ENCODE measurements at regions of chrX and their contacts with region 1.

Region 1: GRCh38 chrX:136747003-136747986 is 33.4 kb downstream of the ARHGEF6 start:
- DNase-seq: no peak
- ATAC-seq: peak; percentile 61
- H3K4me3 ChIP-seq: no peak overlapping the region
- H3K4me3 Mint-ChIP-seq: peak overlapping the region in 9 of 10 donors; percentile 28 to 74 (median 52)
- H3K27ac ChIP-seq: no peak overlapping the region
- H3K27ac Mint-ChIP-seq: peak overlapping the region; percentile 6 to 91 (median 78)
- H3K4me1 ChIP-seq: peaks cover 16 to 40% of the 10 kb centered on the region in 2 donors
- H3K4me1 Mint-ChIP-seq: peaks cover 42 to 89% (median 86%) of the 10 kb centered on the region in 7 donors
- H3K27me3 ChIP-seq: no peaks in the 10 kb centered on the region
- H3K27me3 Mint-ChIP-seq: no peaks in the 10 kb centered on the region

Region 2: DNA sequence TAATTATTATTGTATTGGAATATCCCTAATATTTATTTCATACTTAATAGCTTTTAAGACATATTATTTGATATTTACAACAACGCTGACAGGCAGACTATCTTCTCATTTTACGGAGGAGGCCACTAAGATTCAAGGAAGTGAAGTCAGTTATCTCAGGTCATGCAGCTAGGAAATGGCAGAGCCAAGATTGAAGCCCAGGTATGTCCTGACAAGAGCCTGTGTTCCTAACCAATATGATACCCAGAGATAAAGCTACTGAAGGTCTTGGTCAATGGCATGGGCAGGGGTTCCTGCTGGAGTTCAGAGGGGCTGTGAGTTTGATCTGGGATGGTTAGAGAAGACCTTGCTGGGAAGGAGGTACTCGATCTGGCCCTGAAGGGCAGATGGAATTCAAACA is 13.7 kb before region 1 on chrX:
- CTCF ChIA-PET with region 1: no interaction called
- POLR2A ChIA-PET with region 1: no interaction called
- intact Hi-C with region 1: no loop called
- DNase-seq: no peak
- ATAC-seq: no peak
- H3K4me3 ChIP-seq: no peak overlapping the region
- H3K4me3 Mint-ChIP-seq: peak overlapping the region in 1 of 10 donors; percentile 3
- H3K27ac ChIP-seq: no peak overlapping the region
- H3K27ac Mint-ChIP-seq: peak overlapping the region in 7 of 9 donors; percentile 1 to 89 (median 23)
- H3K4me1 ChIP-seq: no peaks in the 10 kb centered on the region
- H3K4me1 Mint-ChIP-seq: peaks cover 5 to 50% (median 44%) of the 10 kb centered on the region in 7 donors
- H3K27me3 ChIP-seq: no peaks in the 10 kb centered on the region
- H3K27me3 Mint-ChIP-seq: no peaks in the 10 kb centered on the region

Region 3: DNA sequence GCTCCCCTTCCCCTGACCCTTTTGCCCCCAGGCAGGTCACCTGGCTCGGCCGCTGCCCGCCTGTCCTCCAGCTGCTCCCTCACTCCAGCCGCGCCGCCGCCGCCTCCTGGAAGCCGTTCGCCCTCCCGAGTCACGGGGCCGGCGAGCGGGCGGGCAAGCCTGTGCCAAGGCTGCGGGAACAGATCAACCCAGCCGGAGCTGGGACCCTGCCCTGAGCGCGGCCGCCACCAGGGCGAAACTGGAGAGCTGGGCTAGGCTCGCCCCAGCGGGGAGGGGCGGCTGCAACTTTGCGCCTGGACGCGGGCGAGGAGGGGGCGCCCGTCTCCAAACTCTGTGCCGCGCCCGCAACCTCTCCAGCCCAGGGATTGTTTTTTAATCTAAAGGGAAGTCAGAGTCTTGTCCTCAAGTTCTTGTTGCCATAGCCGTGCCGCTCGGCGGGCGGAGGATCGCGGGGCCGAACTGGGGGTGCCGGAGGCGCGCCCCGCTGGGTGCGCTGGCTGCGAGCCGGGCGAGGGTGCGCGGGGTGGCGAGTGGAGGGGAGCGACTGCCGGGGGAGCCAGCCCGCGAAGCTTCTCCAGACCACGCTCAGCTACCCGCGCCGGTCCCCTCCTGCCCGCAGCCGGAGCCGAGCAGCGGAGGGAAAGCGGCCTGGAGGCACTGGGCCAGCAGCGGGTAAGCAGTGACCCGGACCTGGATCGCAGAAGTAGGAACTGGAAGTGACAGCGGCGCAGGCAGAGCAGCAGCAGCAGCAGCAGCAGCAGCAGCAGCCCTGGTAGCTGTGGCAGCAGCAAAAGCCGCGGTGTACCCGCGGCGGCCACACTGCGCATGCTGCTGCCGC is 20.0 kb after region 1 on chrX:
- CTCF ChIA-PET with region 1: no interaction called
- POLR2A ChIA-PET with region 1: interaction called, 5 read pairs
- intact Hi-C with region 1: loop called in 1 of 2 experiments (anchors 2 kb)
- DNase-seq: peak; percentile 20 to 48 (median 41)
- ATAC-seq: peak; percentile 81
- H3K4me3 ChIP-seq: peak overlapping the region; percentile 61
- H3K4me3 Mint-ChIP-seq: peak overlapping the region; percentile 80 to 90 (median 82)
- H3K27ac ChIP-seq: peak overlapping the region; percentile 66
- H3K27ac Mint-ChIP-seq: peak overlapping the region; percentile 66 to 94 (median 87)
- H3K4me1 ChIP-seq: peaks cover 17 to 46% of the 10 kb centered on the region in 2 donors
- H3K4me1 Mint-ChIP-seq: peaks cover 27 to 81% (median 68%) of the 10 kb centered on the region in 7 donors
- H3K27me3 ChIP-seq: no peaks in the 10 kb centered on the region
- H3K27me3 Mint-ChIP-seq: no peaks in the 10 kb centered on the region